B cell (primary cell): ENCODE measurements at regions of chr14 and their contacts with region 1.

Region 1: DNA sequence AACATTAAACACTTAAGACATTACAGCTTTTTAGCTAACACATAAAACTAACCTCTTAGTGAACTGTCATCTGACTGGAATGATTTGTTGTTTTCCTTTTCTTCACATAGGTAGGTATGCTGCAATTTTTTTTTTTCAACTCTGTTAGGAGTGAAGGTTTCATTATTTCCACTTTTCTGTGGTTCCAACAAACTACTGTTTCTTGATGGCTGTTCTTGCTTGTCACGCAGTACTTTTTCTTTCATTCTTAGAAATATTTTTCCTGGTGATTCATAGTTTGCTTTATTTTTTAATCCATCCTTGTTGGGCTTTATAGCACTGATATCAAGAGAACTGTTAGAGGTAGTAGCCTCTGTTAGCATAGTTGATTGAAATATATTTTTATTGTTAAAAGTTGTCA is 6.3 kb downstream of the MIS18BP1 start:
- DNase-seq: no peak
- ATAC-seq: no peak
- H3K4me3 ChIP-seq: no peak overlapping the region
- H3K4me3 Mint-ChIP-seq: no peak overlapping the region
- H3K27ac ChIP-seq: peak overlapping the region in 1 of 2 donors; percentile 35
- H3K27ac Mint-ChIP-seq: no peak overlapping the region
- H3K4me1 ChIP-seq: peaks cover 26 to 34% of the 10 kb centered on the region in 2 donors
- H3K4me1 Mint-ChIP-seq: peaks cover 44% of the 10 kb centered on the region
- H3K27me3 ChIP-seq: no peaks in the 10 kb centered on the region
- H3K27me3 Mint-ChIP-seq: no peaks in the 10 kb centered on the region
- CTCF ChIP-seq: no peak

Region 2: GRCh38 chr14:45177076-45177475 is 69.6 kb before region 1 on chr14:
- CTCF ChIA-PET with region 1: no interaction called
- POLR2A ChIA-PET with region 1: no interaction called
- intact Hi-C with region 1: loop called (anchors 1 kb)
- DNase-seq: no peak
- ATAC-seq: no peak
- H3K4me3 ChIP-seq: no peak overlapping the region
- H3K4me3 Mint-ChIP-seq: no peak overlapping the region
- H3K27ac ChIP-seq: no peak overlapping the region
- H3K27ac Mint-ChIP-seq: no peak overlapping the region
- H3K4me1 ChIP-seq: no peaks in the 10 kb centered on the region
- H3K4me1 Mint-ChIP-seq: no peaks in the 10 kb centered on the region
- H3K27me3 ChIP-seq: no peaks in the 10 kb centered on the region
- H3K27me3 Mint-ChIP-seq: no peaks in the 10 kb centered on the region
- CTCF ChIP-seq: no peak

Region 3: DNA sequence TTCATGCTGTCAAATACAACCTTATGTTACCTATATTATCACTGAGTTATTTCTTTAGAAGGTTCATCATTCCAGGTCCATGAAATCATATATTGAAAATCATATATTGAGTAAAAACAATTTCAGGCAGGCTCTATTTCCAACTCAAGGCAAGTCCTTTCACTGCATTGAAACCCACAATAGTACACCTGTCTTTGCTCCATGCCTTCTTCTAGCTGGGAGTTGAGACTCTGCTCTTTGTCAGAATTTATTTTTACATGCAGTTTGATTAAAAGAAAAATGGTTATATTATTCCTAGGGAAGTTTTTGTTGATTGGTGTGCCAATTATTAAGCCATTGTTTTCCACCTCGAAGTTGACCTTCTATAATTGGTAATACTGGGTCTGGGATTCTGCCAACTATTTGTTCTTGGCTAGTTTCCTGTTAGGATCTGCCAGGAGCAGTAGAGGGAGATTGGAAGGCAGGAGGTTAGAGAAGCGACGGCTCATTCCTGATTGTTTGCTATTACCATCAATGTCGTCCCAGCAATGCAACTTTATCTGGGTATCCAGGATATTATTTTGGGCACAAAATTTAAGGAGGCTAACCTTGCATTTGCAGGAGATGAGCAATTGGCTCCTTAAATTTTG is 85.8 kb after region 1 on chr14:
- CTCF ChIA-PET with region 1: no interaction called
- POLR2A ChIA-PET with region 1: no interaction called
- intact Hi-C with region 1: no loop called
- DNase-seq: no peak
- ATAC-seq: no peak
- H3K4me3 ChIP-seq: no peak overlapping the region
- H3K4me3 Mint-ChIP-seq: no peak overlapping the region
- H3K27ac ChIP-seq: no peak overlapping the region
- H3K27ac Mint-ChIP-seq: no peak overlapping the region
- H3K4me1 ChIP-seq: no peaks in the 10 kb centered on the region
- H3K4me1 Mint-ChIP-seq: no peaks in the 10 kb centered on the region
- H3K27me3 ChIP-seq: no peaks in the 10 kb centered on the region
- H3K27me3 Mint-ChIP-seq: no peaks in the 10 kb centered on the region
- CTCF ChIP-seq: no peak